Endothelial cell of umbilical vein (primary cell): ENCODE measurements at regions of chr5 and their contacts with region 1.

Region 1: GRCh38 chr5:129021744-129022143 is 56.5 kb downstream of the SLC27A6 start:
- DNase-seq: no peak
- H3K4me3 ChIP-seq: no peak overlapping the region
- H3K27ac ChIP-seq: no peak overlapping the region
- H3K4me1 ChIP-seq: no peaks in the 10 kb centered on the region
- H3K27me3 ChIP-seq: no peaks in the 10 kb centered on the region
- CTCF ChIP-seq: no peak
- POLR2A ChIP-seq: no peak

Region 2: DNA sequence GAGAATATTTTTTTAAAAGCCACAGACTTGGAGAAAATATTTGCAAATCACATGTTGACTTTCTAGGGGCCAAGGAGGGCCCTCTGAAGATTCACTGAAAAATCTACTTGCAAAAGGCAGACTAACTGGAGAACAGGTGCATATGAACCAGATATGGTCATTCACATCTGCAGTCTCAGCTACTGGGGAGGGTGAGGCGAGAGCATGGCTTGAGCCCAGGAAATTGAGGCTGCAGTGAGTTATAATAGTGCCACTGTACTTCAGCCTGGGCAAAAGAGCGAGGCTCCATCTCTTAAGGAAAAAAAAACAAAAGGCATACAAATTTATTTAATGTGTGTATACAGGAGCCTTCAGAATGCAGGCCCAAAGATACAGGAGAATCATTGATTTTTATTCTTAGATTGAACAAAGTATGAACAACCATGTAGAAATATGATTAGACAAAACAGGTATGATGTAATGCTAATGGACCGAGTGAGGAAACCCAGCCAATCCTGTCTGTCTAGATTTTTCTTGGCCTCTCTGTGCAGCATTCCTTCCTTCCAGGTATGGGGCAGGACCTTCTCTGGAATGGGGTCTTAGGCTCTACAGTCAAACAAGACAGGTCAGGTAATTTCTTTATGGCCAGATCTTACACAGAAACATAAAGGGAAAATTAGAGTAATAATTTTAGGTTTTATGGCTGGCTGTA is 71.8 kb before region 1 on chr5:
- CTCF ChIA-PET with region 1: no interaction called
- POLR2A ChIA-PET with region 1: no interaction called
- dilution Hi-C with region 1: no loop called
- intact Hi-C with region 1: no loop called
- DNase-seq: no peak
- H3K4me3 ChIP-seq: no peak overlapping the region
- H3K27ac ChIP-seq: no peak overlapping the region
- H3K4me1 ChIP-seq: no peaks in the 10 kb centered on the region
- H3K27me3 ChIP-seq: no peaks in the 10 kb centered on the region
- CTCF ChIP-seq: no peak
- POLR2A ChIP-seq: no peak

Region 3: GRCh38 chr5:129003226-129003625 is 18.5 kb before region 1 on chr5:
- CTCF ChIA-PET with region 1: no interaction called
- POLR2A ChIA-PET with region 1: no interaction called
- dilution Hi-C with region 1: no loop called
- intact Hi-C with region 1: loop called (anchors 2 kb)
- DNase-seq: no peak
- H3K4me3 ChIP-seq: no peak overlapping the region
- H3K27ac ChIP-seq: no peak overlapping the region
- H3K4me1 ChIP-seq: no peaks in the 10 kb centered on the region
- H3K27me3 ChIP-seq: no peaks in the 10 kb centered on the region
- CTCF ChIP-seq: no peak
- POLR2A ChIP-seq: no peak

Region 4: DNA sequence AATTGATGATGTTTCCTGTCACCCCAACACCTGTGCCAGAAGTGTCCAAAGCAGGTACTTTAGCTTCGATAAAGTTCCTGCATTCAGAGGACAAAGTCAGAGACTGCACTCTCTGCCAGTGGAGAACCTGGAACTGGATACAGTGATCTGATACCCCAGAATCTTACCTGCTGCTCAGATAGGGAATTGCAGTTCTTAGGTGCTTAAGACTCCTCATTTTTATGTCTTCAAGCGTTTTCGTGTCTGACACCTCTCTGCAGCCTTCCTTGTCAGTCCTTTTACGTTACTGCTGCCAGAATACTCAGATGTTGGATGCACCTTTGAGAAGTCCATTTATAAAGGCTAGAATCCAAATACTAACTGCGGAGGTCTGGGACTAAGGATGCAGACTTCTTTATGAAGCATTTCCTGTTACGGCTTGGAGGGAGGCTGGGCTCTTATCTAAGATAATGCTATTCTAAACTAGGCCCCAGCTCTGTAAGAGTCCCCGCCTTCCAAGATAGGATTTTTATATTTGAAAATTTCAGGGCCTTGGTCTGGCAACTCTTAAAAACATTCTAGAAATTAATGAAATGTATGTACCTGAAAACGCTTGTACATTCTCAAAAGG is 74.7 kb after region 1 on chr5:
- CTCF ChIA-PET with region 1: no interaction called
- POLR2A ChIA-PET with region 1: no interaction called
- dilution Hi-C with region 1: no loop called
- intact Hi-C with region 1: no loop called
- DNase-seq: peak; percentile 45
- H3K4me3 ChIP-seq: peak overlapping the region in 1 of 3 experiments; percentile 7
- H3K27ac ChIP-seq: no peak overlapping the region
- H3K4me1 ChIP-seq: peaks cover 28% of the 10 kb centered on the region
- H3K27me3 ChIP-seq: no peaks in the 10 kb centered on the region
- CTCF ChIP-seq: peak in 1 of 2 donors; percentile 10
- POLR2A ChIP-seq: no peak